ENCODE measurements at regions of chr17 and their contacts with region 1.

Region 1: DNA sequence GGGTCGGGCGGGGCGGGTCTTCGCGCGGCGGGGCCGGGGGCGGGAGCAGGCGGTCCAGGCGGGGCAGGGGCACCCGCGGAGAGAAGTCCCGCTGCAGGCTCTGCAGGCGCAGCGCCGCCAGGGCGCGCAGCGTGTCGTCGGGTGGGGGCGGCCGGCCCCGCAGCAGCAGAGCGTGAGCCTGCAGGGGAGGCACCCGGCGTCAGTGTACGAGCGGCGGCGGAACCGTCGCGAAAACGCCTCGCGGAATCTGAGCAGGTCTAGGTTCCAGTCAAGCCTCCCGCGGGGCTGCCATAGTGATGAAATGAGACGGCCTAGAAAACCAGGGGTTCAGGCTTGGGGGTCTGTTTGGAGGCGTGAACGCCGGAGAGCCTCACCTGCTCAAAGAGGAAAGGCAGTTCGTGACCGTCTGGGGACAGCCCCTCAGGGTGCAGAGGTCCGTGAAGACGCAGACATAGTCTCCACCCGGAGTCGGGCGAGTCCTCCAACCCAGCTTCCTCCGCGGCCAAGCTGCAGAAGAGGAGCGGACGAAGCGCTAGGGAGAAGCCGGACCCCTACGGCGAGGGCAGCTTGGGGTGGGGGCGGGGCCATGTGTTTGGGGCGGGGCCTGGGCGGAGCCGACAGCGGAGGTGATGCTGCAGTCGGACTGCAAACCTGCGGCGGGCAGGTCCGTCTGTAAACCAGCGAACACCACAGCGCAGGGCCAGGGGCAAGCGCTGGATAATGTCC is 6.4 kb downstream of the PLEKHH3 start:
- DNase-seq: peak in 8 of 9 donors; percentile 30 to 57 (median 44)
- ATAC-seq: peak; percentile 86
- H3K4me3 ChIP-seq: peak overlapping the region; percentile 47
- H3K4me3 Mint-ChIP-seq: peak overlapping the region; percentile 55 to 85 (median 79)
- H3K27ac ChIP-seq: no peak overlapping the region
- H3K27ac Mint-ChIP-seq: peak overlapping the region in 5 of 9 donors; percentile 18 to 74 (median 39)
- H3K4me1 ChIP-seq: peaks cover 2 to 20% of the 10 kb centered on the region in 2 donors
- H3K4me1 Mint-ChIP-seq: peaks cover 7 to 30% (median 24%) of the 10 kb centered on the region in 7 donors
- H3K27me3 ChIP-seq: peaks cover 0 to 28% of the 10 kb centered on the region in 2 donors
- H3K27me3 Mint-ChIP-seq: peaks cover 19 to 58% (median 26%) of the 10 kb centered on the region in 5 donors

Region 2: GRCh38 chr17:42183741-42184711 is 486.3 kb before region 1 on chr17:
- CTCF ChIA-PET with region 1: no interaction called
- POLR2A ChIA-PET with region 1: no interaction called
- intact Hi-C with region 1: no loop called
- DNase-seq: peak; percentile 54 to 92 (median 72)
- ATAC-seq: peak; percentile 78
- H3K4me3 ChIP-seq: peak overlapping the region; percentile 98
- H3K4me3 Mint-ChIP-seq: peak overlapping the region; percentile 85 to 95 (median 90)
- H3K27ac ChIP-seq: peak overlapping the region; percentile 81
- H3K27ac Mint-ChIP-seq: peak overlapping the region; percentile 69 to 94 (median 88)
- H3K4me1 ChIP-seq: peaks cover 15 to 38% of the 10 kb centered on the region in 2 donors
- H3K4me1 Mint-ChIP-seq: peaks cover 21 to 52% (median 41%) of the 10 kb centered on the region in 7 donors
- H3K27me3 ChIP-seq: no peaks in the 10 kb centered on the region
- H3K27me3 Mint-ChIP-seq: peaks cover 0 to 25% (median 8%) of the 10 kb centered on the region in 5 donors

Region 3: DNA sequence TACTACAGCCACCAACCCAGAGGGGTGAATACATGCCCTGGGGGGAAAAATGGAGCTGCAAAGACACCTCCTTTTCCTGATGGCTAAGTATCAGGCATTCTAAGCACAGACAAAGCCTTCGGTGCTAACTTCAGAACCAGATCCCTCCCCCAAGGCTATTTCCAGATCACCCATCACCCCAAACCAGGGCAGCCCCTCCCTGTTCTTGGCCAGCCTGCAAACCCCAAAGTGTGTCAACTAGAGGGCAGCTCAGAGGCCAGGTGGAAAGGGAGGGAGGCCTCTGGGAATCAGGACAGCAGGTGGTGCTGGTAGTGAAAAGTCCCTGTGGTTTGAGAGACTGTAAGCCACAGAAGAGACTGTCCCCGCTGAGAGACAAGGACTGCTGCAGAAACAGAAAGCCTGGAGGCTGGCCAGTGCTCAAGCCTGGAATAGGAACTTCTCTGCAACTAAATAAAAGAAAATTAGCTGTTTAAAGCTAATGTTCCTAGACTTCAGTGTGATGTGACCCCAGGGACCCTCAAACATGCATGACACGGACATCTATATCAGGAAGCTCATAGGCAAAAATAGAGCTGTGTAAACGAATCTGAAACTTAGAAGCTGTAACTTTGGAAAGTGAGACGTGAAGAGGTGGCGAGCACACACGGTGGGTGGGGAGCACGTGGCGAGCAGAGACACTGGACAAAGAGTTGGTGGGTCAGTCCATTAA is 51.8 kb before region 1 on chr17:
- CTCF ChIA-PET with region 1: no interaction called
- POLR2A ChIA-PET with region 1: no interaction called
- intact Hi-C with region 1: no loop called
- DNase-seq: no peak
- ATAC-seq: no peak
- H3K4me3 ChIP-seq: no peak overlapping the region
- H3K4me3 Mint-ChIP-seq: no peak overlapping the region
- H3K27ac ChIP-seq: no peak overlapping the region
- H3K27ac Mint-ChIP-seq: peak overlapping the region in 2 of 9 donors; percentile 6 to 28
- H3K4me1 ChIP-seq: no peaks in the 10 kb centered on the region
- H3K4me1 Mint-ChIP-seq: peaks cover 0 to 8% (median 0%) of the 10 kb centered on the region in 7 donors
- H3K27me3 ChIP-seq: no peaks in the 10 kb centered on the region
- H3K27me3 Mint-ChIP-seq: no peaks in the 10 kb centered on the region

Region 4: DNA sequence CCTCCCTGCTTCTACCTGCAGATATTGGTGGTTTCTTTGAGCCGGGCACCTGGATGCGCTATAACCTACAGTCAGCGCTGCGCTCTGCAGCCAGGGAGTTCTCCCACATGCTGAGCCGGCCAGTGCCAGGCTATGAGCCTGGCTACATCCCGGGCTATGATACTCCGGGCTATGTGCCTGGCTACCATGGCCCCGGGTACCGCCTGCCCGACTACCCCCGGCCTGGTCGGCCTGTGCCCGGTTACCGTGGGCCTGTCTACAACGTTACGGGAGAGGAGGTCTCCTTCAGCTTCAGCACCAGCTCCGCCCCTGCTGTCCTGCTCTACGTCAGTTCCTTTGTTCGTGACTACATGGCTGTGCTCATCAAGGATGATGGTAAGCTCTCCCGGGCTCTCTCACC is 25.1 kb after region 1 on chr17:
- CTCF ChIA-PET with region 1: no interaction called
- POLR2A ChIA-PET with region 1: no interaction called
- intact Hi-C with region 1: no loop called
- DNase-seq: no peak
- ATAC-seq: no peak
- H3K4me3 ChIP-seq: no peak overlapping the region
- H3K4me3 Mint-ChIP-seq: no peak overlapping the region
- H3K27ac ChIP-seq: no peak overlapping the region
- H3K27ac Mint-ChIP-seq: peak overlapping the region in 1 of 9 donors; percentile 37
- H3K4me1 ChIP-seq: no peaks in the 10 kb centered on the region
- H3K4me1 Mint-ChIP-seq: peaks cover 0 to 1% (median 0%) of the 10 kb centered on the region in 7 donors
- H3K27me3 ChIP-seq: no peaks in the 10 kb centered on the region
- H3K27me3 Mint-ChIP-seq: no peaks in the 10 kb centered on the region

Region 5: DNA sequence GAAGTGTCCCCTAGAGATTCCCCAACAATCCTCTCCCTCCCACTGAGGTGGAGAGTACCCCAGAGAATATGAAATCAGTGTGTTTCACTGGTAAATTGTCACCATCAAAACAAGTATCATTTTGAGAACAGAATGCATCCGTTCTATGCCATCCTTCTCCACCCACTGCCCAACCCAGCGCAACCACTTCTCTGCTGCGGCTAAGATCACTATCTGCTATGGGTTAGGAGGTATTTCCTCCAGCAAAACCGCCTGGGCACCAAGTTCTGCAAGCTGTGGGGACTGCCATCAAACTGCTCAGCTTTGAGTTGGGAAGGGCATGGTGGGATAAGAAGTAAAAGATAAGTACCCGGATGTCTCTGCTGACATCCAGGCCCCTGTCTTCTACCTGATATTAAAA is 36.4 kb after region 1 on chr17:
- CTCF ChIA-PET with region 1: interaction called, 10 read pairs
- POLR2A ChIA-PET with region 1: no interaction called
- intact Hi-C with region 1: no loop called
- DNase-seq: peak in 7 of 9 donors; percentile 35 to 71 (median 56)
- ATAC-seq: peak; percentile 92
- H3K4me3 ChIP-seq: no peak overlapping the region
- H3K4me3 Mint-ChIP-seq: peak overlapping the region; percentile 16 to 84 (median 62)
- H3K27ac ChIP-seq: no peak overlapping the region
- H3K27ac Mint-ChIP-seq: peak overlapping the region in 5 of 9 donors; percentile 38 to 83 (median 78)
- H3K4me1 ChIP-seq: peaks cover 25 to 27% of the 10 kb centered on the region in 2 donors
- H3K4me1 Mint-ChIP-seq: peaks cover 4 to 33% (median 25%) of the 10 kb centered on the region in 7 donors
- H3K27me3 ChIP-seq: no peaks in the 10 kb centered on the region
- H3K27me3 Mint-ChIP-seq: no peaks in the 10 kb centered on the region

Measured in naive thymus-derived CD4-positive, alpha-beta T cell (primary cell).